ENCODE measurements at regions of chr9 and their contacts with region 1.

Region 1: GRCh38 chr9:112012026-112012902 is 115.7 kb downstream of the UGCG start:
- DNase-seq: no peak
- H3K4me3 Mint-ChIP-seq: no peak overlapping the region
- H3K27ac Mint-ChIP-seq: no peak overlapping the region
- H3K4me1 Mint-ChIP-seq: peaks cover 22% of the 10 kb centered on the region
- H3K27me3 Mint-ChIP-seq: peaks cover 49% of the 10 kb centered on the region

Region 2: GRCh38 chr9:112028280-112029221 is 16.3 kb after region 1 on chr9:
- intact Hi-C with region 1: loop called (anchors 2 kb)
- DNase-seq: no peak
- H3K4me3 Mint-ChIP-seq: no peak overlapping the region
- H3K27ac Mint-ChIP-seq: no peak overlapping the region
- H3K4me1 Mint-ChIP-seq: peaks cover 29% of the 10 kb centered on the region
- H3K27me3 Mint-ChIP-seq: peaks cover 7% of the 10 kb centered on the region

Region 3: DNA sequence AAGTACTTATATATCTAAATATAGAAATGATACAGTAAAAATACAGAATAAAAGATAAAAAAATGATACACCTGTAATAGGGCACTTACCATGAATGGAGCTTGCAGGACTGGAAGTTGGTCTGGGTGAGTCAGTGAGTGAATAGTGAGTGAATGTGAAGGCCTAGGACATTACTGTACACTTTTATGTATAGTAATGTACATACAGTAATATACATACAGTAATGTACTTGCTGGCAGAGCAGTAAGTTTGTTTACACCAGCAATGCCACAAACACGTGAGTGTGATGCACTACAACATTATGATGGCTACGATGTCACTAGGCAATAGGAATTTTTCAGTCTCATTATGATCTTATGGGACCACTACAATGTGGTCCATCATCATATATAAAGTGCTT is 128.7 kb after region 1 on chr9:
- intact Hi-C with region 1: no loop called
- DNase-seq: no peak
- H3K4me3 Mint-ChIP-seq: no peak overlapping the region
- H3K27ac Mint-ChIP-seq: no peak overlapping the region
- H3K4me1 Mint-ChIP-seq: no peaks in the 10 kb centered on the region
- H3K27me3 Mint-ChIP-seq: no peaks in the 10 kb centered on the region

Measured in activated T-helper 2 cell treated with anti-CD3 and anti-CD28 coated beads, Interferon-gamma antibody, Interleukin-2, Interleukin-4, amounts not matched to agents 10 μg/mL and 5 μg/mL and 100 μg/mL, durations not matched to agents 14 hours and 24 hours and 36 hours (primary cell).